ENCODE measurements at regions of chr7 and their contacts with region 1.

Region 1: GRCh38 chr7:78530351-78530750 is 731.8 kb downstream of the PHTF2 start:
- DNase-seq: peak; percentile 24
- ATAC-seq: no peak
- H3K4me3 ChIP-seq: no peak overlapping the region
- H3K27ac ChIP-seq: no peak overlapping the region
- H3K4me1 ChIP-seq: no peaks in the 10 kb centered on the region
- H3K27me3 ChIP-seq: no peaks in the 10 kb centered on the region
- CTCF ChIP-seq: no peak

Region 2: DNA sequence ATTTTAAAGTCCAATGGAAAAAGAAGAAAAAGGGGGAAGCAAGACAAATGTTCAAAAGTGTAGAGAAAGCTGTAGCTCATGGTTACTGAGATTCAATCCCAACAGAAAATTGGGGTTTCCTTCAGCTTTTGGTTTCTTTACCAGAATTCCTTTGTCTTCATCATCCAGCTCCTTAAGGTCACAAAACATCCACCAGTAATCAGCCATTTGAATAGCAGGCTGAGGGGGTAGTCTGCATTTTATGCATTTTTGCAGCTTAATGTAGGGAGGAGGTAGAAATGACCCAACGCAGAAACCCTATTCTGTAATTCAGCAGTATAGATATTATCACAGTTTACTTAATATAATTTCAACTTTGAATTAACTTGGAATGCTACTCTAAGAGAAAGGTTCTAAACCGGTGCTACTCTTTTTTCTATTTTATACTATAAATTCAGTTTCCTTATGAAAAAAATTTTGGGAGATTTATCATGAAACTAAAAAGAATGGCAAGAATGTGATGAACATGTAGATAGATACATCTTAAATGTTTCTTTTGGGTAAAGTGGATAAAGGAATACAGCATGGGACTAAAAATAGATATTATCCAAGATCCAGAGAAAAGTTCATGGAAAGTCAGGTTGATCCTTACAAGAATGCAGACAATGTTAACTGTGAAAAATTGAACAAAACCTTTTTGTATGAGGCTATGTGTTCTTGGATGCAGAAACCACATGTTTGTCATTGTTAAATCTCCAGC is 134.9 kb before region 1 on chr7:
- CTCF ChIA-PET with region 1: no interaction called
- POLR2A ChIA-PET with region 1: no interaction called
- in situ Hi-C with region 1: no loop called
- intact Hi-C with region 1: no loop called
- DNase-seq: no peak
- ATAC-seq: no peak
- H3K4me3 ChIP-seq: no peak overlapping the region
- H3K27ac ChIP-seq: no peak overlapping the region
- H3K4me1 ChIP-seq: no peaks in the 10 kb centered on the region
- H3K27me3 ChIP-seq: peaks cover 12% of the 10 kb centered on the region
- CTCF ChIP-seq: no peak

Region 3: GRCh38 chr7:78472519-78472918 is 57.8 kb before region 1 on chr7:
- CTCF ChIA-PET with region 1: no interaction called
- POLR2A ChIA-PET with region 1: no interaction called
- in situ Hi-C with region 1: no loop called
- intact Hi-C with region 1: no loop called
- DNase-seq: no peak
- ATAC-seq: no peak
- H3K4me3 ChIP-seq: no peak overlapping the region
- H3K27ac ChIP-seq: no peak overlapping the region
- H3K4me1 ChIP-seq: no peaks in the 10 kb centered on the region
- H3K27me3 ChIP-seq: peaks cover 2% of the 10 kb centered on the region; the same call in 1 of the 2 replicates
- CTCF ChIP-seq: no peak

Region 4: DNA sequence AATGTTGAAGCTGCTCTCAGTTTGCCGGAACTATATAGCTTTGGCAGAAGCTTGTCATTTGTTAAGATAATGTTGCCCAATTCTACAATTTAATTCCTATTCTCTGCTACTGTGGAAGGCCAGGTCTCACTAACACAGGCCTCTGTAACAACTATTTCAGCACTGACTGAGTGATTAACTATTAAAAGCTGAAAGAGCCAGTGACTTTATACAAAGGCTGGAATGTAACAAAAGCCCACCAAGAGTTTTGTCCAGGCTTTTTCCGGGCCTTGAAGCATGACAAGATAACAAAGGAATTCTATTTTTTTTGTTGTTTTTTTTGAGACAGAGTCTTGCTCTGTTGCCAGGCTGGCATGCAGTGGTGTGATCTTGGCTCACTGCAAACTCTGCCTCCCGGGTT is 63.8 kb after region 1 on chr7:
- CTCF ChIA-PET with region 1: no interaction called
- POLR2A ChIA-PET with region 1: no interaction called
- in situ Hi-C with region 1: no loop called
- intact Hi-C with region 1: loop called (anchors 10 kb)
- DNase-seq: no peak
- ATAC-seq: no peak
- H3K4me3 ChIP-seq: no peak overlapping the region
- H3K27ac ChIP-seq: no peak overlapping the region
- H3K4me1 ChIP-seq: no peaks in the 10 kb centered on the region
- H3K27me3 ChIP-seq: no peaks in the 10 kb centered on the region
- CTCF ChIP-seq: no peak

Measured in Panc1 (cell line).